ENCODE measurements at regions of chr4 and their contacts with region 1.

Region 1: GRCh38 chr4:47562297-47562696 is 77.2 kb downstream of the ATP10D start:
- DNase-seq: peak; percentile 7
- H3K4me3 ChIP-seq: no peak overlapping the region
- CTCF ChIP-seq: no peak

Region 2: GRCh38 chr4:46931981-46932380 is 630.3 kb before region 1 on chr4:
- CTCF ChIA-PET with region 1: interaction called, 15 read pairs
- POLR2A ChIA-PET with region 1: no interaction called
- DNase-seq: no peak
- H3K4me3 ChIP-seq: no peak overlapping the region
- CTCF ChIP-seq: peak; percentile 71

Region 3: GRCh38 chr4:47088298-47088697 is 474.0 kb before region 1 on chr4:
- CTCF ChIA-PET with region 1: no interaction called
- POLR2A ChIA-PET with region 1: no interaction called
- DNase-seq: no peak
- H3K4me3 ChIP-seq: no peak overlapping the region
- CTCF ChIP-seq: no peak

Region 4: DNA sequence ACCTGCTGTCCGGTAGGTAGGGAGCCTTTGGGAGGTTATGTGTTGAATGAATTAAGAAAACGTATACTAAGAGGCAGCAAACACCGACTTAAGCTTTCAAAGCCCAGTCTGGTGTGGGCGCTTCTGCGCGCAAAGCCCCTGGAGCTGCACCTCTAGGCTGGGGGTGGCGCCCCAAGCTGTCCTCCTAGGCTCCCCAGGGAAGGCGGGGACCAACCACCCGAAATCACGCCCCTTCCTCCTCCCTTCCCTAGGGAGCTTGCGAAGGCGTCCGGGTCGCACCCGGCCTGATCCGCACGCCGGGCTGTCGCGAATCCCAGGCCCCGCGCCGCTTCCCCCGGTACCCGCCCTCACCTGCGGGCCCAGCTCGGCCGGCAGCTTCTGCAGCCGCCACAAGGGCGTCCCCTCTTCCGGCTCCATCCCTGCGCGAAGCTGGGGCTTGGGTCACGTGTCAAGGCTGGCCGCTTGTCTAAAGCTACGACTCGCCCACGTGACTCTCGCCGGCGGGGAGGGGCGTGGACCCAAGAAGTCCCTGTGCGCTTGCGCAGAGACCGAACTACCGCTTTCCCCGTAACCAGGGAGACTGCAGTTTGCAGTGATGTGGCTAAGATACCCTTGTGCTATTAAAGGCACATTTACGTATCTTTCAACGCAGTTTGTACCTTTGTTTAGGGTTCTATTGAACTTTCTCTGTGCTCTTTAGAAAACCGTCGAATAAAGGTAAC is 98.9 kb before region 1 on chr4 and contains the start of gene COMMD8:
- CTCF ChIA-PET with region 1: interaction called, 22 read pairs
- POLR2A ChIA-PET with region 1: no interaction called
- DNase-seq: no peak
- H3K4me3 ChIP-seq: peak within 1 kb of the TSS; percentile 76
- CTCF ChIP-seq: peak; percentile 59

Region 5: GRCh38 chr4:47471064-47471463 is 91.2 kb before region 1 on chr4:
- CTCF ChIA-PET with region 1: interaction called, 11 read pairs
- POLR2A ChIA-PET with region 1: no interaction called
- DNase-seq: no peak
- H3K4me3 ChIP-seq: no peak overlapping the region
- CTCF ChIP-seq: no peak

Region 6: DNA sequence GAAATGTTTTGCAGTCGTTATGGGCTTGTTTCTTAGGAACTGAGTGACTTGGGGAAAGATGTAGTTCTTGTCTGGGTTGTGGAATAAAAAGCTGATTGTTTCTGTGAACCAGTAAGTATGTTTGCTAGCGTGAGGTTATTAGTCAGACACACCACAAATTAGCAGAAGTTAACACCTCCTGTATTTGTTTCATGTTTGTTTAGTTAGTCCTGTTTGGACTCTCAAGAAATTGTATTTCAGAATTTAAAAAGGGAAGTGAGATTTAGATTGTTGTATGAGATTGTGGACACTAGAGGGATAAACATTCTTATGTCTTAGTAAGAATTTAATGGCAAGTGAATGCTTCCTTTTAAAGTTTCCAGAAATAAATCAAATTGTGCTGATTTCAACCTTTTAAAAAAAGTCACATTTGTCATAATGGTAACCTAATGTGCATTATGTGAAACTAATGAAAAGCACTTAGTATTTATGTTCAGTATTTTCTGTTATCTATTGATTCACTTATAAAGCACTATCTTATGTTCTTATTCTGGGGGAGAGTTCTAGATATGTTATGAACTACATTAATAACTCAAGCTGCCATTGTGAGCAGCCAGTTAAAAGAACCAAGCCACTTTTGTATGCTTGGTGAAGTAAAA is 51.7 kb before region 1 on chr4:
- CTCF ChIA-PET with region 1: interaction called, 29 read pairs
- POLR2A ChIA-PET with region 1: no interaction called
- DNase-seq: no peak
- H3K4me3 ChIP-seq: no peak overlapping the region
- CTCF ChIP-seq: no peak

Region 7: DNA sequence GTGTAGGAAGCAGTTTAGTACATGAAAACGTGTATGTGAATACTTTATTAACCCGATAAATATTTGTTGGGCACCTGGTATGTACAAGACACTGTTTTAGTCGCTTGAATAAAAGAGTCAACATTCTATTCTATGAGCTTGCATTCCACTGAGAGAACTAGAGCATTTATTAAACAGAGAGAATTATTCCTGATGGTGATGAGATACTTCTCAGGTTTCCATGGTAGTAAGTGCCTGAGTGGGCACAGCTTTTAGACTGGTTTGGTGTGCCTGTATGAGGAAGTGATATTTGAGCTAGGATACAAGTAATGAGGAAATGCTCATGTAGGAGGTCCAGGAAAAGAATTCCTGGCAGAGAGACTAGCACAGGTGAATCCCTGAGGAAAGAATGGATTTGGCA is 16.9 kb after region 1 on chr4:
- CTCF ChIA-PET with region 1: interaction called, 25 read pairs
- POLR2A ChIA-PET with region 1: no interaction called
- DNase-seq: no peak
- H3K4me3 ChIP-seq: no peak overlapping the region
- CTCF ChIP-seq: no peak

Region 8: GRCh38 chr4:47662975-47663374 is 100.7 kb after region 1 on chr4:
- CTCF ChIA-PET with region 1: no interaction called
- POLR2A ChIA-PET with region 1: no interaction called
- DNase-seq: no peak
- H3K4me3 ChIP-seq: no peak overlapping the region
- CTCF ChIP-seq: no peak